AG04450 (cell line): ENCODE measurements at regions of chr1 and their contacts with region 1.

Region 1: DNA sequence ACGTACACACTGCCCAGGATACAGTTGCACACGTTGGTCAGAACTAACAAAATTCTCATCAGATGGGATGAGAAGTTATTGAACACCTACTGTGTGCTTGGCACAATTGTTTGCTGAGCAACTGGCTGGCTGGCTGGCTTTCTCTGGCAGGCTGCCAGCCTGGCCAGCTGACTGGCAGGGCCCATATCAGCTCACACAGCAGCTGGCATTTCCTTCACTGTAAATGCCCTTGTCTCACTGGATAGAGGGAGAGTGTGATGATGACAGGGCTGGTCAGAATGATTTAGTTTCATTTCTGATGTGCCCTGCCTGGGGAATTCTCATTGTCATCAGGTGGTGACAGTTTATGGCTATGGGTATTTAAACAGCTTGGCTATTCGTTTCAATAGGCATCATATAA is 15.8 kb downstream of the CAMK2N1 start:
- DNase-seq: no peak
- H3K4me3 ChIP-seq: no peak overlapping the region
- H3K27ac ChIP-seq: no peak overlapping the region
- H3K27me3 ChIP-seq: peaks cover 28% of the 10 kb centered on the region
- CTCF ChIP-seq: no peak

Region 2: GRCh38 chr1:20483833-20484518 is 13.8 kb after region 1 on chr1:
- CTCF ChIA-PET with region 1: no interaction called
- POLR2A ChIA-PET with region 1: interaction called, 10 read pairs
- DNase-seq: no peak
- H3K4me3 ChIP-seq: peak overlapping the region; percentile 88
- H3K27ac ChIP-seq: peak overlapping the region; percentile 68
- H3K27me3 ChIP-seq: peaks cover 2% of the 10 kb centered on the region
- CTCF ChIP-seq: no peak